ENCODE measurements at regions of chr3 and their contacts with region 1.

Region 1: DNA sequence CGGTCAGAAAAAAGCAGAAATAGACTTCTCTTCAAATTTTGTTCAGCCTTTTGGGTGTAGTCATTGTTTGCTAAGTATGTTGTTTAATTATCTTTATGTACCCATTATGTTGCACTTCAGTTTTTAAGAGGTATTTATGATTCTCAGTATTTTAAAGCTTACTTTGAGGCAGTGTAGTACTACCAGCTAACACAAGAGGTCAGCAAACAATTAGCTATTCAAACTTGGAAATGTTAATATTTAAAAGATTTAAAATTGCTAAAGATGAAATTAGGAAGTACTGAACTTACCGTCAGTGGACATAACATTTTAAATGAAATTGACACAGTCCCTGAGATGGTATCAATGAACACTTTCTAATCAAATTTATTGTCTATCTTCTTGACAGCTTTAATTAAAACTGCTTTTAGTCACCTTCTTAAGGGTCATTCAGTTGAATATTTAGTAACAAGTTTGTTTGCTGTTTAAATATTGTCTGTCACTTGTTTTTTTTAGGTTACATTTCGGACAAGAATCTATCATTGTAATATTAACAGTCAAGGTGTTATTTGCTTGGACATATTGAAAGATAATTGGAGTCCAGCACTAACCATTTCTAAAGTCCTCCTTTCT is 28.1 kb downstream of the NKIRAS1 start:
- DNase-seq: peak in 1 of 2 experiments; percentile 21
- H3K4me3 ChIP-seq: no peak overlapping the region
- H3K4me3 Mint-ChIP-seq: no peak overlapping the region
- H3K27ac Mint-ChIP-seq: no peak overlapping the region
- H3K4me1 ChIP-seq: no peaks in the 10 kb centered on the region
- H3K4me1 Mint-ChIP-seq: no peaks in the 10 kb centered on the region
- H3K27me3 ChIP-seq: no peaks in the 10 kb centered on the region
- H3K27me3 Mint-ChIP-seq: no peaks in the 10 kb centered on the region
- CTCF ChIP-seq: peak; percentile 60 to 65

Region 2: DNA sequence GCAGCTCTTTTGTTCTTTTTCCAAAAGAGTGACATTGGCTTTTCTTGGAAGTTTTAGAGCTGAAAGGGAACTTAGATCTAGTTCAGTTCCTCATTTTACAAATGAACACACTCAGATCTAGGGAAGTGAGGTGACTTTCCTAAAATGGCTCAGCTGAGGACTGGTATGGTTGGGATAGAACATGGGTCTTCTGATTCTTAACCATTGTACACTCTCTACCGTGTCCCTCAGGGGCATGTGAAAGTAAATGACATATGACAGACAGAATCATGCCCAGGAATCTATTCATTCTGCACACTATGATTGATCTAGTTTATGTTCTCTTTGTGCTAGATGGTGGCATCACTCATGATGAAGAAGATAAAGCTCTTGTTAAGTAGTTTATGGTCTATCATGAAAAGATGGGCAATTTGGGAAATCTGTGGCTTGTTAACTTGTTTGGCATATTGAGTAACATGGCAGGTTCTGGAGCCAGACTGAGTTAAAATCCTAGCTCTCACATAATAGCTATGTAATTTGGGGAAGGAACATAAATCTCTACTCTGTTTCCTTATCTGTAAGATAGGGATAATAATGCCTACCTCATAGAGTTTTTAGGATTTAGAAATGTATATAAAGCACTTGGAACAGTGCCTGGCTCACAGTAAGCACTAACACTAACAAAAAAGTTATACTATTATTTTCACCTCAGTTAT is 52.0 kb before region 1 on chr3:
- CTCF ChIA-PET with region 1: interaction called, 10 read pairs
- POLR2A ChIA-PET with region 1: no interaction called
- intact Hi-C with region 1: no loop called
- DNase-seq: no peak
- H3K4me3 ChIP-seq: no peak overlapping the region
- H3K4me3 Mint-ChIP-seq: no peak overlapping the region
- H3K27ac Mint-ChIP-seq: no peak overlapping the region
- H3K4me1 ChIP-seq: no peaks in the 10 kb centered on the region
- H3K4me1 Mint-ChIP-seq: no peaks in the 10 kb centered on the region
- H3K27me3 ChIP-seq: no peaks in the 10 kb centered on the region
- H3K27me3 Mint-ChIP-seq: no peaks in the 10 kb centered on the region
- CTCF ChIP-seq: no peak

Region 3: DNA sequence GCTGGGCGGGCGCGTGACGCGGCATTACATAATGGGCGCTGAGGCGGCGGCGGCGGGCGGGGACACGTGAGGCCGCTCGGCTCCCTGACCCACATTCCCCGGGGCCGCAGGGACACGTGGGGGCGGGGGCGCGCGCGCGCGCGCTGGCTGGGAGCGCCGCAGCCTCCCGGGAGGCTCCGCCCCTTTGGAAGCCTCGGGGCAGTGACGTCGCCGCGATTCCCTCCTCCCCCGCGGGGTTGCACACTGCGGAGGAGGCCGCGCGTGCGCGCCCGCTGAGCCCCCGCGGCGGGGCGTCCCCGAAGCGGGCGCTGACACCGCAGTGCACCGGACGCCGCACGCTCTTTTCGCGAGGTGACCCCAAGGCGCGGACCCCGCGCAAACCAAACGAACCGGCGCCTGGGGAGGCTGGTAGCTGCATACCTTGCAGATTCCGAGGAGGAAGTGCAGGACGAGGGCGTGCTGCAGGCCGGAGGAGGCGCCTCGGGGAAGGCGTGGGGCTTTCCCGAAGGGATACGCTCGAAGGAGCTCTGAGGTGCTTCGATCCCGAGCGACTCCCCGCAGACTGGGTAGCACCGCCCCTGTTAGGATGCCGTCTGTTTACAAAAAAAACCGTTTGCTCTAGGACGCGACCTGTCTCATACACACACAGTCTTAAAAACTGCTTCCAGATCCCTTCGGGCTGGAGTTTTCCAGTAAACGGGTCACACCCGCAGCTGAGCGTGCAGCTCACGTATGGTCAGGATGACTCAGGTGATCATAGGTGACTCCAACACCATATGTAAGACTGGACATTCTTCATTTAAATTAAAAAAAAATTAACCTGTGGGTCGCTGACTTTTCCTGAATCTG is 57.4 kb after region 1 on chr3:
- CTCF ChIA-PET with region 1: no interaction called
- POLR2A ChIA-PET with region 1: no interaction called
- intact Hi-C with region 1: loop called (anchors 5 kb)
- DNase-seq: peak; percentile 96 to 98
- H3K4me3 ChIP-seq: peak overlapping the region; percentile 94
- H3K4me3 Mint-ChIP-seq: peak overlapping the region; percentile 94
- H3K27ac Mint-ChIP-seq: peak overlapping the region; percentile 95
- H3K4me1 ChIP-seq: peaks cover 27% of the 10 kb centered on the region
- H3K4me1 Mint-ChIP-seq: peaks cover 21% of the 10 kb centered on the region
- H3K27me3 ChIP-seq: no peaks in the 10 kb centered on the region
- H3K27me3 Mint-ChIP-seq: no peaks in the 10 kb centered on the region
- CTCF ChIP-seq: no peak

Region 4: DNA sequence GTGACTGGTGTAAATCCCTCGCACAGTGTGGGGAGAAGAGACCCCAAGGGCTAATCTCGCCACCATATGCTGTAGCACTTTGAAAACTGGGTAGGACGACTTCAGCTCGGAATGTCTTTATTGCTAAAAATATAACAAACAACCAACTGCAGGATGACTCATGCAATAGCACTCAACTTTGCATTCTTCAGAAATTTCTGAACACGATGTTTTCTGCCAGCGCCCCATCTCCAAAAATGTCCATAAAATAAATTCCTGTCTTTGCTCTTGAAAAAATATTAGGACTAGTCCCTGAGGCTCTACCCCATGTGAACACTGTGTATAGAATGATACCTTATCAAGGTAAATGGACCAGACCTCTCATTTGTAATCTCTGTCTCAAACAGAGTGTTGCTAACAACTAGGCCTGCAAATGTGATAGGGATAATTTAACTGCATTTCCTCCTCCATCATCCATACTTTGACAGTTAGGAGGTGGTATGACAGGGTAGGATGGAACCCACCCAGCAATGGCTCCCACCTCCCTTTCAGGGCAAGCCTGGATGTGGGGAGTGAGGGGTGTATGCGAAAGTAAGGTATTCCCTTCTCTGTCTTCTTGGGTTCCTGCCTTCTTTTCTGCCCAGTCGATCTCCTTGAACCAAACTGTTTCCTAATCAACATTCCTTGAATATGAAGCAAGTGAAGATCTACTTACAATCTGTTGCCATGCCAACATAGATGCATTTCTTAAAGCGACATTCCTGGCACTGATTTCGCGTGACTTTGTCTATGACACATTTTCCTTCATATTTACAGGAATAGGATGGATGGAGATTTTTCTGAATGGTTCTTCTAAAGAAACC is 257.5 kb after region 1 on chr3:
- CTCF ChIA-PET with region 1: no interaction called
- POLR2A ChIA-PET with region 1: no interaction called
- intact Hi-C with region 1: no loop called
- DNase-seq: peak; percentile 46 to 53
- H3K4me3 ChIP-seq: no peak overlapping the region
- H3K4me3 Mint-ChIP-seq: peak overlapping the region; percentile 43
- H3K27ac Mint-ChIP-seq: peak overlapping the region; percentile 85
- H3K4me1 ChIP-seq: peaks cover 58% of the 10 kb centered on the region
- H3K4me1 Mint-ChIP-seq: peaks cover 20% of the 10 kb centered on the region
- H3K27me3 ChIP-seq: no peaks in the 10 kb centered on the region
- H3K27me3 Mint-ChIP-seq: no peaks in the 10 kb centered on the region
- CTCF ChIP-seq: no peak